Heart right ventricle (tissue), 16 donors: ENCODE measurements at regions of chr16 and their contacts with region 1.

Region 1: DNA sequence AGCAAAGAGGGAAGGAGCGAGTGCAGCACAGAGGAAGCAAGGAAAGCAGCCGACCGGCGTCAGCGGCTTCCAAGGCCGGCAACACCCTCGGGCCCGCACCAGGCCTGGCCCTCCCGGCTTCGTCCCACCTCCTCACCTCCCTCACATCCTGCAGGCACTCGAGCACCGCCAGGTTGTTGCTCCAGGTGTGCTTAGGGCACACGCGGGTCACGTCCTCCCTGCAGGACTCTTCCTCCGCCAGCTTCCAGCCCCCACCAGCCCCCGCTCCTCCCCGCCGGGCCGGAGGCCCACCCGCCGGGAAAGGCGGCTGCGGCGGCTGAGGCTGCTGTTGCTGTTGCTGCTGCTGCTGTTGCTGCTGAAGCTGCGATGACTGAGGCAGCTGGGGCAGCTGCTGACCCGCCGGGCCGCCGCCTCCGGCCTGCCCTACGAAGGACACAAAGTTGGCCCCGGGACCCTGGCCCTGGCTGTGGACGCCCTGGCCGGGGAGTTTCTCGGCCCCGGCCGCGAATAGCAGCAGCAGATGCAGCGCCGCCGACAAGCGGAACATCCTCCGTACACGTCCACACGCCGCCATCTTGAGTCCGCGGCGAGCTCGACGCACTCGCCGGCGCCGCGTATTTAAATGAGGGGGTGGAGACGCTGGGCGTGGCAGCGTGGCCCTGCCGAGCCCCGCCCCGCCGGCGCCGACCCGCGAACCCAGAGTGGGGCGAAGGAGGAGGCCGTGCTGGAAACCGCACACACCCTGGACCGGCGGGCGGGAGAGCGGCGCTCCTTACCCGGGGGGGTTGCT is at the start of gene GLG1:
- DNase-seq: peak; percentile 91 to 94
- ATAC-seq: peak; percentile 97 to 99 (median 98)
- H3K4me3 ChIP-seq: peak within 1 kb of the TSS; percentile 80 to 100 (median 96)
- H3K27ac ChIP-seq: peak within 1 kb of the TSS; percentile 85 to 98 (median 96)
- H3K4me1 ChIP-seq: peaks cover 0 to 53% (median 38%) of the 10 kb centered on the region in 9 donors
- H3K27me3 ChIP-seq: no peaks in the 10 kb centered on the region
- CTCF ChIP-seq: peak in 2 of 9 donors; percentile 5 to 11
- total RNA-seq, gene GLG1: 79.5 to 136 (median 104) TPM

Region 2: GRCh38 chr16:74448992-74449434 is 157.7 kb before region 1 on chr16:
- intact Hi-C with region 1: no loop called
- DNase-seq: peak; percentile 37 to 89
- ATAC-seq: peak; percentile 91 to 98 (median 96)
- H3K4me3 ChIP-seq: peak overlapping the region in 1 of 10 donors; percentile 19
- H3K27ac ChIP-seq: peak overlapping the region; percentile 72 to 91 (median 81)
- H3K4me1 ChIP-seq: peaks cover 8 to 52% (median 34%) of the 10 kb centered on the region in 9 donors
- H3K27me3 ChIP-seq: no peaks in the 10 kb centered on the region
- CTCF ChIP-seq: no peak

Region 3: GRCh38 chr16:74480141-74481029 is 126.3 kb before region 1 on chr16:
- intact Hi-C with region 1: loop called in 1 of 10 experiments (anchors 10 kb)
- DNase-seq: peak in 1 of 2 donors; percentile 35
- ATAC-seq: peak in 6 of 8 donors; percentile 49 to 80 (median 58)
- H3K4me3 ChIP-seq: no peak overlapping the region
- H3K27ac ChIP-seq: peak overlapping the region in 2 of 10 donors; percentile 1 to 45
- H3K4me1 ChIP-seq: peaks cover 0 to 13% (median 6%) of the 10 kb centered on the region in 9 donors
- H3K27me3 ChIP-seq: no peaks in the 10 kb centered on the region
- CTCF ChIP-seq: no peak

Region 4: DNA sequence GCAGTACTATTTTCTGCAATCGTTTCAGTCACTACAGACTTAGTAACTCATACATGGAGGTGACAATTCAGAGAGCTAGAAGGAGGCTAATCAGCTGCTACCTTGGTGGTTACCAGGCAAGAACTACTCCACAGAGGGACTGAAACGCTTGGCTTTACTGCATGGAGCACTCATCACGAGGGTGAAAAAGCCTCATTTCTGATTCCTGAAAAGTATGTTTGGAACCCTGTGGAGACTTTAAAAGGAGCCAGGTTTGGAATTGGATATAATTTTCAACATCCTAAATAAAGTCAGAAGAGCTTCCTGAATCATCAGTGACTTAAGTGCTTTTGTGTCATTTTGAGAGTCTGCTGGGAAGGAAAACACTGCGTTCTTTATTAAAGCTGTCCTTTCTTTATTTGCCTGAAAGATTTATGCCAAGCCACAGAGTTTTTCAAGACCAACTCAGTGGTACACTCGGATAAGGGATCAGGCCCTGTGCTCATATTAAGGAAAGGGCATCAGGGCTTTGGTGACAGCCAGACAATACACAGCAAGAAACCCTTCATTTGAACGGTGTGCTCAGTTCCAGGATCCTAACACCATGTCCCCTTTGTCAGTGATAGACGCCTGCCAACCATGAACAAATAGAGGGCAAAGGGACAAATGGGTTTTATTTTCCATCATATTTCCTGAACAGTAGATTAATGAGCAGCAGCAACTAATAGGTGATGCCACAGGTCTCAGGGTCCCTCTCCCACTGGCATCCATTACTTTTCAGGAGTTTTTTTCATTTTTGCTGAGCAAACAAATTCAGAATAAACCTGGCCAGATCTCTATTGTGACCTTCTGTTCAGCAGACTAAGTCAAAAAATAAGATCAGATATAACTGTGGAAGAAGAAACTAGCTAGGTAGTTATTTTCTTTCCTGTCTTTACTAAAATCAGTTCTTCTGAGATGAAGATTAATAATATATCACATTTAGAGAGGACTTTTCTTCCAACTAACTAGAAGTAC is 104.9 kb before region 1 on chr16:
- intact Hi-C with region 1: loop called in 5 of 10 experiments (anchors 5 to 10 kb)
- DNase-seq: peak in 1 of 2 donors; percentile 9
- ATAC-seq: peak in 6 of 8 donors; percentile 73 to 95 (median 92)
- H3K4me3 ChIP-seq: no peak overlapping the region
- H3K27ac ChIP-seq: peak overlapping the region; percentile 33 to 73 (median 57)
- H3K4me1 ChIP-seq: peaks cover 0 to 39% (median 14%) of the 10 kb centered on the region in 9 donors
- H3K27me3 ChIP-seq: no peaks in the 10 kb centered on the region
- CTCF ChIP-seq: no peak

Region 5: DNA sequence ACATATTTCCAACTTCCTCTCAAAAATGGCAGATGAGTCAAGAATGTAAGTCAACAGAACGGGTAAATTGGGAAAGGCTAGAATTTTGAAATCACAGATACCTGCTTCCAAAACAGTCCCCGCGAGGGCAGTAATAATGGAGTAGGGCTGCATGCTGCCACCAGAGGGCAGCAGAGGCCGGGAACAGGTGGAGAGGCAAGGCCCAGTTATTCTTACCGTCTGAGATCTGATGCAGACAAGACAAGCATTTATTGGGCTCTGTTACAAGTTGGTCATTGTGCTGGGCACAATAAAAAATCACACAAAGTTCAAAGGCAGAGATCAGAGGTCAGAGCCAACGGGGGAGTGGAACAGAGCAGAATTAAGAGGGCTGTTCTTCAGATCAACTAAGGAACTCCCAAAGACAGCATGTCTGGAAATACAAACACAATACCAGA is 102.7 kb after region 1 on chr16:
- intact Hi-C with region 1: no loop called
- DNase-seq: peak; percentile 72 to 80
- ATAC-seq: peak; percentile 74 to 93 (median 88)
- H3K4me3 ChIP-seq: no peak overlapping the region
- H3K27ac ChIP-seq: no peak overlapping the region
- H3K4me1 ChIP-seq: no peaks in the 10 kb centered on the region
- H3K27me3 ChIP-seq: no peaks in the 10 kb centered on the region
- CTCF ChIP-seq: peak; percentile 87 to 100 (median 95)